Activated CD4-positive, alpha-beta T cell treated with anti-CD3 and anti-CD28 coated beads, Interleukin-2, amount 10 ng/mL, durations not matched to agents 24 days and 14 days (primary cell): ENCODE measurements at regions of chr6 and their contacts with region 1.

Region 1: GRCh38 chr6:125790358-125791150 is at the start of gene NCOA7:
- DNase-seq: peak; percentile 95
- H3K4me3 Mint-ChIP-seq: peak within 1 kb of the TSS; percentile 96
- H3K27ac Mint-ChIP-seq: peak within 1 kb of the TSS; percentile 99
- H3K4me1 Mint-ChIP-seq: peaks cover 49% of the 10 kb centered on the region
- H3K27me3 Mint-ChIP-seq: no peaks in the 10 kb centered on the region
- total RNA-seq, gene NCOA7: 52.5 and 53.7 TPM in 2 replicates

Region 2: DNA sequence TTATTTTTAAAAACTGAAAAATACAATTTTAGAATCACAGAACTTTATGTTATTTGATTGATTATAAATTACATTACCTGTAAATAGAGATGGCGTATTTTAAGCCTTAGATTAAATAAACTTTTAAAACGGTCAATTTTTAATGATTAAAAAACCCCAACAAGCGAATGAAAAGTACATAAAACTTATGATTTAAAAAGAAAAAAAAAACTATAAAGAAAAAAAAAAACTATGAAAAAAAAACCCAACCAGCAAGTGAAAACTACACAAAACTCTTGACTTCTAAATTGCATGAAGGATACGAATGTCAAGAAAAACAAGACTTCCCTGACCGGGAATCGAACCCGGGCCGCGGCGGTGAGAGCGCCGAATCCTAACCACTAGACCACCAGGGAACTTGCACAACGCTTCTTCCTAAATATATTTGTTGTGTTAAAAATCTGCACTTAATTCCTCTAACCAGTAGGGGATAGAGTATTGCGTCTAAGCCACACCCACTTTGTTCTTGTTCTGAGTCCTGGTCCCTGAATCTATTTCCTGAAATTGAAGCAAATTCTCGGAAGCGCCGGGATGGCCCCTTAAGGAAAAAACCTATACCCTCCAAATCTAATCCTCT is 10.5 kb before region 1 on chr6:
- intact Hi-C with region 1: loop called (anchors 1 kb)
- DNase-seq: peak; percentile 95
- H3K4me3 Mint-ChIP-seq: no peak overlapping the region
- H3K27ac Mint-ChIP-seq: no peak overlapping the region
- H3K4me1 Mint-ChIP-seq: peaks cover 10% of the 10 kb centered on the region
- H3K27me3 Mint-ChIP-seq: peaks cover 25% of the 10 kb centered on the region

Region 3: GRCh38 chr6:125829433-125829832 is 38.9 kb after region 1 on chr6:
- intact Hi-C with region 1: loop called (anchors 2 kb)
- DNase-seq: peak; percentile 78
- H3K4me3 Mint-ChIP-seq: peak overlapping the region; percentile 17
- H3K27ac Mint-ChIP-seq: peak overlapping the region; percentile 22
- H3K4me1 Mint-ChIP-seq: peaks cover 56% of the 10 kb centered on the region
- H3K27me3 Mint-ChIP-seq: no peaks in the 10 kb centered on the region

Region 4: DNA sequence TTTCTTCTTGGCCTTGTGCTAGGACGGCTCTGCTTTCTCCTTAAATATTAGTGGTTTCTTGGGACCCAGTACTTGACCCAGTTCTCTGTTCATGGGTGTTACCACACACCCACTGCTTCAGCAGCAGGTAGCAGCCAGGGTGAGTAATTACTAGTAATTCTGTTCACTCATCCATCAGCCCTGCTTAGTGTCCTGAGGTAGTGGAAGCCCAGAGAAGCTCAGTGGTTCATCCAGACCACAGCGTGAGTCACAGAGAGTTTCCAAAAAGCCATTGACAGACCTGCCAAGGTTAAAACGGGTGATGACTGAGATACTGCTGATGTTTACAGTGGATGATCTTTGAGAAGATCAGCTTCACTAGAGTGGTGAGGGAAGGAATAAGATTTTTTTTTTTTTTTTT is 114.3 kb after region 1 on chr6:
- intact Hi-C with region 1: loop called (anchors 1 kb)
- DNase-seq: peak; percentile 83
- H3K4me3 Mint-ChIP-seq: peak overlapping the region; percentile 15
- H3K27ac Mint-ChIP-seq: peak overlapping the region; percentile 67
- H3K4me1 Mint-ChIP-seq: peaks cover 34% of the 10 kb centered on the region
- H3K27me3 Mint-ChIP-seq: no peaks in the 10 kb centered on the region

Region 5: DNA sequence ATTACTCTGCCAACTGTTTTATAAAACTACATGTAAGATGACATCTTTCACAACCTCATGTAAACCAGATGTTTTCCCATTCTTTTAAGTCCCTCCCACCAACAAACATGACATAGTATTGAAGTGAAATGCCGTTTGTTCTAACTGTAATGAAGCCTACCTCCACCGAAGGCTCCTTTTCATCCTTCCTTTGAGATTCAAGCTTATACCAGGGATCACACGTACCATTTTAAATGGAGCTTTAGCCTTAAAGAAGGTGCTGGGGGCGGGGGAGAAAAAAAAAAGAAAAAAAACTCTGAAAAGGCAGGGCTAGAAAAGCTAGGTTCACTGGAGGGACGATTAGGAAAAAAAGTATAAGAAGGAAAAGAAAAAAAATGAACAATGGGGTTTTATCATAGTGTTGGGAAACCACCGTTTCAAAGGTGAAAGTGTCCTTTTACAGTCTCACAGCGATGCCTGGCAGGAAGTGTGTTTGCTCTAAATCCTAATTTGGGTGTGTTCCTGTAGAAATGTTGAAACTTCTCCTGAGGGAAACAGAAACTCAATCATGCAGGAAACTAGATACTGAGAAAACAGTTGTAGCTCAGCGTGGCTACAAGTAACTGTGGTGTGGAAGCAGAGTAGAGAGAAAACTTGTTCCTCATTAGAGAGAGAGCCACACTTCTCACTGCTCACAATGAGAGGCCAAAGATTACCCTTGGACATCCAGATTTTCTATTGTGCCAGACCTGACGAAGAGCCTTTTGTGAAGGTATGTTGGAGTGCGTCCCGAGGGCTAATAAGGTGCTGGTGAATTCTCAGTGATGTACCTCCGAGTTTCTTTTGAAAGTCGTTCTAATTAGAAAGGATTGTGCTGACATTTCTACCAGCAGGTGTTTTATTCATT is 128.4 kb after region 1 on chr6:
- intact Hi-C with region 1: loop called (anchors 1 kb)
- DNase-seq: peak; percentile 89
- H3K4me3 Mint-ChIP-seq: peak overlapping the region; percentile 88
- H3K27ac Mint-ChIP-seq: peak overlapping the region; percentile 94
- H3K4me1 Mint-ChIP-seq: peaks cover 51% of the 10 kb centered on the region
- H3K27me3 Mint-ChIP-seq: no peaks in the 10 kb centered on the region